HCT116 (cell line): ENCODE measurements at regions of chr17 and their contacts with region 1.

Region 1: DNA sequence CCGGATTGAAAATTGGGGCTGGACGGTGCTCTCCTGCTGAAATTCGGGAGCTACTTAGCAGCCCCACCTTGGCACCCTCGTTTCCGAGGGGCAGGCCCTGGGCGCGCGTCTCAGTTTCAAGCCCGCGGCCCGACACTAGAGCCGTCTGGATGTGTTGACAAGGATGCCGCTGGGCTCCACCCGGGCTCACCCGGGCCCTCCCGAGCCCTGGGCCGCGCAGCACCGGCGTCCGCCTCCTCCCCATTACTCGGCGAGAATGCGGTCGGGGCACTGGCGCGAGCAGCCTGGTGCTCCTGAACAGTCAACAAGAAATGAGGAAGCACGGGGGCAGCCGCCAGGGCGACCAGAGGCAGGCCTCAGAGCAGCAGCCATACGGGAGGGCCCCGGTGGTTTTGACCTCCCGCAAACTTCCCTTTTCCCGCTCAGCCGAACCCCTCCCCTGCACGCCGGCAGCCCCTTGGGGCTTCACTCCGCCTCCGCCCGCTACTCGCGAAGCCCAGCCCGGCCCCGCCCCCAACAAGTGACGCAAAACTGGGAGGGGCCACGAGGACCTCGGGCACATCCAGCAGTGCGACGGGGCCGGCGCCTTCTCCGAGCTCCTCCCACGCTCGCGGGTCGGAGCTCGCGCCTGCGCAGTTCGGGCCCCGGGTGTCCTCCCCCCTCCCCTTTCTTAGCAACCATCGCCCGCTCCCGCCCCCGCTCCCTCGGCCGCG is 447 bp upstream of the SEC14L1 start:
- DNase-seq: peak; percentile 96
- ATAC-seq: peak; percentile 94
- H3K4me3 ChIP-seq: peak overlapping the region; percentile 53 to 82
- H3K27ac ChIP-seq: peak overlapping the region; percentile 91
- H3K4me1 ChIP-seq: peaks cover 13 to 31% of the 10 kb centered on the region in 2 experiments
- H3K27me3 ChIP-seq: no peaks in the 10 kb centered on the region
- CTCF ChIP-seq: no peak
- POLR2A ChIP-seq: peak; percentile 96
- RAD21 ChIP-seq: no peak

Region 2: DNA sequence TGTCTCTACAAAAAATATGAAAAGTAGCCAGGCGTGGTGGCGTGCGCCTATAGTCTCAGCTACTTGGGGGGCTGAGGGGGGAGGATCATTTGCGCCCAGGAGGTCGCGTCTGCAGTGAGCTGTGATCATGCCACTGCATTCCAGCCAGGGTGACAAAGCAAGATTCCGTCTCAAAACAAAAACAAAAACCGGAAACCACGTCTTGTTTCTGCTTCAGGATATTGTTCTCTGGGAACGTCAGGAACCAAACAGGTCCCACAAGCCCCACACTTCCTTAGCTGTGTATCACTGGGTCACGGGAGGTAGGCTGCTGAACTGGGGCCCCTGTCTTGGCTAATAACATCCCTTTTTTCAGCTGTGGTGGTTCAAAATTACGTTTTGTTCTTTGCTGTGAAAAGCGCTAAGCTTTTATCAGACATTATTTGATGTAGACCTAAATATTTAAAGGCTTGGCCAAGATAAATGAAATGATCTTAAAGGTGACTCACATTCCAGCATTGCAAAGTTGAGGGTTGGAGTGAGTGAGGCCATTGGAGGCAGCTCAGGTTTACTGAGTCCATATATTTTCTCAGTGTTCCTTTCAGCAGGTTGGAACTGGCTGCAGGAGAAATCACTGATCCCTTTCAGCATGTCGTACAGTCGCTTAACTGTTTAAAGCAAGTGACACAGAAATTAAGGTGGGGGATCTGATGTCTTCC is 16.0 kb before region 1 on chr17:
- CTCF ChIA-PET with region 1: interaction called, 5 read pairs
- POLR2A ChIA-PET with region 1: interaction called, 19 read pairs
- RAD21 ChIA-PET with region 1: interaction called in 1 of 2 experiments, 4 read pairs
- intact Hi-C with region 1: loop called (anchors 2 kb)
- DNase-seq: peak; percentile 79
- ATAC-seq: peak; percentile 60
- H3K4me3 ChIP-seq: peak overlapping the region; percentile 17 to 42
- H3K27ac ChIP-seq: peak overlapping the region; percentile 75
- H3K4me1 ChIP-seq: peaks cover 56 to 87% of the 10 kb centered on the region in 2 experiments
- H3K27me3 ChIP-seq: no peaks in the 10 kb centered on the region
- CTCF ChIP-seq: no peak
- POLR2A ChIP-seq: no peak
- RAD21 ChIP-seq: no peak